K562 (cell line): ENCODE measurements at regions of chr4 and their contacts with region 1.

Region 1: DNA sequence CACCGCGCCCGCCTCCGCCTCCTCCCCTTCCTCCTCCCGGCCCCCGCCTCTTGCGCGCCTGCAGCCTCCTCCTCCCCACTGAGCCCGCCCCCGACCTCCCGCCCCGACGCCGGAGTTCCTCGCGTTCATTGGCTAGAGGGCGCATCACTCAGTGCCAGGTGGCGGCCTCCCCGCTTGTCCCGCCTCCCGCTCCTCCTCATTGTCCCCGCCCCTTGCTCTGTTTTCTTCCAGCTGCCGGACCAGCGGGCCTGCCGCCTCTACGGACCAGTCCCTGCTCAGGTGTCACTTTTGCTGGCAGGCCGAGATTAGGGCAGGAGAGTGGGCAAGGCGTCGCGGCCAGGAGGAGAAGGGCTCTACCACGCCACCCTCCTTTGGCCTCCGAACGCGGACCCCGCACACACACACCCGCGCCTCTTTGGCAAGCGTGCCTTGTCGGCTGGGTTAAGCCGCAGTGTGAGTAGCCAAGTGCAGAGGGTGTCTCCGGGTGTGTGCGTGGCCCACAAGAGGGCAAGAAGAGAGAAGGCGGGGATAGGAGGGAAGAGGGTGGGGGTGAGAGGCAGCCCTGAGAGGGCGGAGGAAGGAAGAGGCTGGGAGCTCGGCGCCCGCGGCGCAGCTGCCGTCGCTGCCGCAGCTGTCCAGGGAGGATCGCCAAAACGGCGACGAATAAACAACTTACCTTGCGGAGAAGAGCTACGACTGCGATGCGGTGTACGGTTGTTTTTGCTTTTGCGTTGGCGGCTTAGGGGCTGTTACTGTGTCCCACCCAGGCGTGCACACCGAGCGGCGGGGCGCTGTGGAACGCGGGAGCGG is 436 bp upstream of the PPP3CA start:
- DNase-seq: peak; percentile 95 to 100 (median 100)
- ATAC-seq: peak; percentile 97
- H3K4me3 ChIP-seq: peak overlapping the region; percentile 77
- H3K27ac ChIP-seq: peak overlapping the region; percentile 61; the same call in 2 of the 3 replicates
- H3K4me1 ChIP-seq: peaks cover 5 to 21% of the 10 kb centered on the region in 2 experiments; a peak in 4 of 5 replicates
- H3K27me3 ChIP-seq: peaks cover 0 to 7% of the 10 kb centered on the region in 2 experiments; a peak in 3 of 5 replicates
- CTCF ChIP-seq: no peak
- EP300 ChIP-seq: no peak
- POLR2A ChIP-seq: no peak; the same call in 1 of the 2 replicates
- RAD21 ChIP-seq: peak in 1 of 2 experiments; percentile 23; a peak in 2 of 4 replicates

Region 2: DNA sequence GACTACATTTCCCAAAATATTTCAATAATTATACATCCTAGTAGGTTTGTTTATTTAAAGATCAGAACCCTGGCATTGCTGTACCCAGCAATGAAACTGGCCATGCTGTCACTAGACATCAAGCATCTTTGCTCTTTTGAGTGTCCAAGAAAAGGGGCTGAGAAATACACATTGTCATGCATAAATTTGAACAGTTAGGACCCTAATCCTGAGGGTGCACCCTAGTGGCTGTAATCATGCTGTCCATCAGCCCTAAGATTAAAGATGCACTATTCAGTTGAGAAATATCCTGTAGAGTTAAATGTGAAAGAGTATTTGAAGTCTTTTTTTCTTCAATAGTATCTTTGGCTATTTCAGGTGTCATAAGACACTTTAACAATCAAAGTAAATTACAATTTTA is 1262.2 kb after region 1 on chr4:
- CTCF ChIA-PET with region 1: no interaction called
- POLR2A ChIA-PET with region 1: no interaction called
- in situ Hi-C with region 1: no loop called
- intact Hi-C with region 1: loop called (anchors 10 kb)
- DNase-seq: peak in 2 of 4 experiments; percentile 16
- ATAC-seq: 0 out of 3 replicates have a peak, but pooled peaks have one; percentile 55
- H3K4me3 ChIP-seq: no peak overlapping the region
- H3K27ac ChIP-seq: no peak overlapping the region
- H3K4me1 ChIP-seq: no peaks in the 10 kb centered on the region
- H3K27me3 ChIP-seq: no peaks in the 10 kb centered on the region
- CTCF ChIP-seq: peak; percentile 19 to 53 (median 38); a peak in 4 of 6 replicates
- EP300 ChIP-seq: no peak
- POLR2A ChIP-seq: no peak
- RAD21 ChIP-seq: peak; percentile 17 to 53; a peak in 2 of 4 replicates